ENCODE measurements at regions of chr18 and their contacts with region 1.

Region 1: DNA sequence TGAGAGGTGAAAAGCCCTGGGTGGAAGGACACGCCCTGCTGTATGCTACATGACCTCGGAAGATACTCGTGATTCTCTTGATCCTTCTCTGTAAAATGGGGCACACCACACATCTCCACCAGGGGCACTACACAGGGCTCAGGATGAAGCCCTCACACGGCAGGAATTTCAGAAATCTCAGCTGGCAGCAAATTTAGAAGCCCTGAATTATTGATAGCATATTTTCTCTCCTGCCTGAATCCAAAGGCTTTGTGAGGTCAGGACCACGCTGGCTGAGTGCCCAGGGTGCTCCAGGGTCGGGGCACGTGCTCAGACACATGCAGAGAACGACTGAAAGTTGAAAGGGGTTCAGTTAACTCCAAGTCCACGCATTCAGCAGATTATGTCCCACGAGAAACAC is 42.1 kb upstream of the GALR1 start:
- DNase-seq: peak; percentile 81 to 82
- ATAC-seq: peak; percentile 47 to 75 (median 69)
- H3K4me3 ChIP-seq: no peak overlapping the region
- H3K27ac ChIP-seq: peak overlapping the region; percentile 76
- H3K4me1 ChIP-seq: peaks cover 24% of the 10 kb centered on the region
- H3K27me3 ChIP-seq: no peaks in the 10 kb centered on the region
- CTCF ChIP-seq: peak; percentile 54

Region 2: DNA sequence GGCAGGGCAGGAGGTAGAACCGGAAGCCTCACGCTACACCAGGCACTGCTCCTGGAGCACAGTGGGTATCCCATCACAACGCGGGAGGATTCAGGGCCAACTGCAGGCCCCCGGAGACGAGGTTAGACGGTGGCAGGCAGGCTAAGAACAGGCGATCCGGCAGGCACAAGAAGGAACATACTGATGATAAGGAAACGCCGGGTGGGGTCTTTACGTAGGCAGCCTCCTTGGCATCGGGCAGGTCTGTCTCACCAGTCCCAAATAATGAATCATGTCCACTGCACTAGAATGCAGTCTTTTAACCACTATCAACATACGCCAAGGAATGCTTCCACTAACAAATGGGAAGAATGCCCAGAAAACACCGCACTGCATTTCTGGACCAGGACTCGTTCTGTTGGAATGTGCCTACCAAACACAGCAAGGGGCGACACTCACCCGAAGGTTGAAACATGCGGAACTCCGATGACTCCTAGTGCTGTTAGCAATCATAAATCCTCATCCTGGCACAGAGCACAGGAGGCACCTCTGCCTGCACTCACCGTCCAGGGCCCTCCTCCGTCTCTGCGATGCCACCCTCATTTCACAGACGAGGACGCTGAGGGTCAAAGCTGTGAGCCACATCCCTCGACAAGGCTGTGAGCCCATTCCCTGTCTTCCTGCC is 747.7 kb before region 1 on chr18:
- intact Hi-C with region 1: loop called in 1 of 2 experiments (anchors 5 kb)
- DNase-seq: peak; percentile 59 to 77
- ATAC-seq: peak; percentile 80 to 85 (median 82)
- H3K4me3 ChIP-seq: peak overlapping the region; percentile 49
- H3K27ac ChIP-seq: peak overlapping the region; percentile 90
- H3K4me1 ChIP-seq: peaks cover 46% of the 10 kb centered on the region
- H3K27me3 ChIP-seq: no peaks in the 10 kb centered on the region
- CTCF ChIP-seq: no peak

Region 3: DNA sequence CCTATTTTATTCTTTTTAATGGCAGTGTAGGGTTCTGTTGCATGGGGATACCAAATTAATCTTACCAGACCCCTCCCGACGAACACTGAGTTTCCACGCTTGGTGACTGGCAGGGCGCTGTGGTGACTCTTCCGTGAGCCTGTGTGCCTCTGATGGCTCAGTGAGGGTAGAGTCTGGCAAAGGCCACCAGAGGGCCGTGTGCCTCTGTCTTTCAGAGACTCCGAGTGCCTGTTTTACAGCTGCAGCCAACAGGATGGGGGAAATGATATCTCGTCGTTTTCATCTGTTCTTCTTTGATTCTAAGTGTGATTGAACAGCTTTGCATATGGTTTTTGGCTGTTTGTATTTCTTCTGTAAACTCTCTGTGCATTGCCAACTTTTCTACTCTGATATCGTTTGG is 285.4 kb before region 1 on chr18:
- intact Hi-C with region 1: loop called in 1 of 2 experiments (anchors 10 kb)
- DNase-seq: peak; percentile 32 to 72
- ATAC-seq: peak; percentile 83 to 92 (median 90)
- H3K4me3 ChIP-seq: no peak overlapping the region
- H3K27ac ChIP-seq: no peak overlapping the region
- H3K4me1 ChIP-seq: peaks cover under 1% of the 10 kb centered on the region
- H3K27me3 ChIP-seq: no peaks in the 10 kb centered on the region
- CTCF ChIP-seq: peak; percentile 55

Region 4: DNA sequence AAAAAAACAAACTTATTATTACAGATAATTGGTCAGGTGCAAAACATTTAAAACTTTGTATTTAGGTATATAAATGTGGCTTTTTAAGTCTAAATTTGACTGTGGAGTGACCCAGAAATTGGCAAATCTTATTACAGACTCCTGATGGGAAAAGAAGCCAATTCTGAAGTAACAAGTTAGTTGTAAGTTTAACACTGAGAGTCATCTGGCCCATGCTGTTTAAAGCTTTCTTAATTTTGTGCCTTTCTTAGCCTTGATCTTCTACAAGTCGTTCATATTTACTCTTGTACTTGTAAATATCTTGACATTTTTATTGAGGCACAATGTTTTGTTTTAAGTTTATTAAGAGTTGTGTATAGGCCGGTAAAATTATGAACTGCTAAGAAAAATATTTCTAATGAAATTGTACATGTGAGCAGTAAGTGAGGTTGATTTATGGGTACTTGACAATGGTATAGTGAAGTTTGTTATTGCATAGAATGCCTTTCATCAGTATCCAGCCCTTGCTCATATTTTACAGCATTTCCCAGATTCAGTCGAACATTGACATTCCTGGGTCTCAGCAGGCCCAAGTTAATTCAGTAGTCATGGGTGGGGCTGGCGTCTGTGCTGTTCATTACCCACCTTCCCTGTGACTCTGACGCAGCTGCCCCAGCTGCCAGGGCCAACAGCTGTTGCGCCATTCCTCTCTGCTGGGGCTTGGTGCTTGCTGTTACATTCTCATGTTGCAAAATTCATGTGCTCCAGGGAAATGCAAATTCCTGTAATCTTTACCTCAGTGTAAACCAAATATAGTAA is 263.8 kb before region 1 on chr18:
- intact Hi-C with region 1: no loop called
- DNase-seq: peak; percentile 69 to 77
- ATAC-seq: peak; percentile 64 to 93 (median 76)
- H3K4me3 ChIP-seq: no peak overlapping the region
- H3K27ac ChIP-seq: no peak overlapping the region
- H3K4me1 ChIP-seq: no peaks in the 10 kb centered on the region
- H3K27me3 ChIP-seq: no peaks in the 10 kb centered on the region
- CTCF ChIP-seq: no peak

Region 5: DNA sequence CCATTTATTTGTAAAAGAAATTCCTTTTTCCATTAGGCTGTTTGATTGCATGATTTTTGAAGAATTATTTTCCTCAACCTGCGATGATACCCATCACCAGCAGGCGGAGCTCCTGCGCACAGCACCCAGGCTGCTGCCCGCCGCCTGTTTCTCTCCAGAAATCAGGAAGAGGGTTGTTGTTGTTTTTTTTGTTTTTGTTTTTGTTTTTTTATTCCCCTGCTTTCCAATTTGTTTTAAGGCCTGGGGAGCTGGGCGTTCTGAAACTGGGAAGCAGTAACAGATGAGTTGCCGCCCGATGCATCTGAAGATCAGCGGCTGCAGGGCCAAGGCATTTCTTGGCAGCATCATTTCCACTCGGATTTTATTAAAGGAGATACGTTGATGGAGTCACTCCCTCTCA is 207.0 kb before region 1 on chr18:
- intact Hi-C with region 1: loop called (anchors 2 to 5 kb)
- DNase-seq: peak; percentile 58 to 75
- ATAC-seq: peak; percentile 34 to 74 (median 61)
- H3K4me3 ChIP-seq: peak overlapping the region; percentile 43
- H3K27ac ChIP-seq: no peak overlapping the region
- H3K4me1 ChIP-seq: peaks cover 4% of the 10 kb centered on the region
- H3K27me3 ChIP-seq: no peaks in the 10 kb centered on the region
- CTCF ChIP-seq: peak; percentile 99

Region 6: GRCh38 chr18:77061946-77062517 is 145.5 kb before region 1 on chr18:
- intact Hi-C with region 1: loop called in 1 of 2 experiments (anchors 5 kb)
- DNase-seq: no peak
- ATAC-seq: peak; percentile 36 to 57 (median 56)
- H3K4me3 ChIP-seq: no peak overlapping the region
- H3K27ac ChIP-seq: peak overlapping the region; percentile 74
- H3K4me1 ChIP-seq: peaks cover 37% of the 10 kb centered on the region
- H3K27me3 ChIP-seq: no peaks in the 10 kb centered on the region
- CTCF ChIP-seq: no peak

Region 7: GRCh38 chr18:77071711-77072292 is 135.7 kb before region 1 on chr18:
- intact Hi-C with region 1: loop called in 1 of 2 experiments (anchors 10 kb)
- DNase-seq: no peak
- ATAC-seq: peak in 1 of 4 donors; percentile 28
- H3K4me3 ChIP-seq: no peak overlapping the region
- H3K27ac ChIP-seq: peak overlapping the region; percentile 54
- H3K4me1 ChIP-seq: peaks cover 60% of the 10 kb centered on the region
- H3K27me3 ChIP-seq: no peaks in the 10 kb centered on the region
- CTCF ChIP-seq: no peak

Measured in psoas muscle (tissue), 8 donors.